Naive thymus-derived CD4-positive, alpha-beta T cell (primary cell): ENCODE measurements at regions of chr22 and their contacts with region 1.

Region 1: GRCh38 chr22:35299673-35300497 is at the start of gene TOM1:
- DNase-seq: peak; percentile 96 to 100 (median 98)
- ATAC-seq: peak; percentile 91
- H3K4me3 ChIP-seq: peak within 1 kb of the TSS; percentile 77
- H3K4me3 Mint-ChIP-seq: peak within 1 kb of the TSS; percentile 89 to 99 (median 94)
- H3K27ac ChIP-seq: peak within 1 kb of the TSS; percentile 95
- H3K27ac Mint-ChIP-seq: peak within 1 kb of the TSS; percentile 94 to 100 (median 98)
- H3K4me1 ChIP-seq: peaks cover 10% of the 10 kb centered on the region in 2 donors
- H3K4me1 Mint-ChIP-seq: peaks cover 13 to 50% (median 38%) of the 10 kb centered on the region in 7 donors
- H3K27me3 ChIP-seq: no peaks in the 10 kb centered on the region
- H3K27me3 Mint-ChIP-seq: no peaks in the 10 kb centered on the region
- total RNA-seq, gene TOM1: 36.5 to 225 (median 62.1) TPM

Region 2: GRCh38 chr22:35288116-35288515 is 11.8 kb before region 1 on chr22:
- CTCF ChIA-PET with region 1: interaction called, 3 read pairs
- POLR2A ChIA-PET with region 1: interaction called, 15 read pairs
- intact Hi-C with region 1: no loop called
- DNase-seq: no peak
- ATAC-seq: no peak
- H3K4me3 ChIP-seq: no peak overlapping the region
- H3K4me3 Mint-ChIP-seq: no peak overlapping the region
- H3K27ac ChIP-seq: no peak overlapping the region
- H3K27ac Mint-ChIP-seq: no peak overlapping the region
- H3K4me1 ChIP-seq: no peaks in the 10 kb centered on the region
- H3K4me1 Mint-ChIP-seq: peaks cover 0 to 6% (median 0%) of the 10 kb centered on the region in 7 donors
- H3K27me3 ChIP-seq: no peaks in the 10 kb centered on the region
- H3K27me3 Mint-ChIP-seq: no peaks in the 10 kb centered on the region

Region 3: DNA sequence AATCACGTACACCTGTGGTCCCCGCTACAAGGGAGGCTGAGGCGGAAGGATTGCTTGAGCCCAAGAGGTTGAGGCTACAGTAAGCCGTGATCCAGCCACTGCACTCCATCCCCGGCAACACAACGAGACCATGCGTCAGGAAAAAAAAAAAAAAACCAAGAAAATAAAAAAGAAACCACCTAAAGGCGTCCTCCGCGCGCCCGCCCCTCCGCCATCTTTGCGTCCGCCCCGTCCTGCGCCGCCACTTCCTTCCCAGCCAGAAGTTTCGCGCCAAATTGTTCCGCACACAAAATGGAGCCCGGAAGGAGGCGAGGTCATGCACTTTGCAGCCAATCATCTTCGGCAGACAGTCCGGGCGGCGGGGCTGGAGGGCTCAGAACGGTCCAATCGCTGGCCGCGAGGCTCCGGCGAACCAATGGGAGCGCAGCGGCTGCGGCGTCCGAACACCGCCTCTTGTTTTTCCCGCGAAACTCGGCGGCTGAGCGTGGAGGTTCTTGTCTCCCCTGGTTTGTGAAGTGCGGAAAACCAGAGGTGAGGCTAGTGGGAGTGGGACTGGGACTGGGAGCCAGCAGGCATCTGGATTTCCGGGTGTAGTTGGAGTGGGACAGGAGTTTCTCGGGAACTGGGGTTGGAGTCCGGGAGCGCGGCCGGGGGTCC is 99.9 kb after region 1 on chr22 and contains the start of gene MCM5:
- CTCF ChIA-PET with region 1: no interaction called
- POLR2A ChIA-PET with region 1: no interaction called
- intact Hi-C with region 1: loop called in 1 of 2 experiments (anchors 1 kb)
- DNase-seq: peak; percentile 86 to 98 (median 97)
- ATAC-seq: peak; percentile 99
- H3K4me3 ChIP-seq: peak within 1 kb of the TSS; percentile 86
- H3K4me3 Mint-ChIP-seq: peak within 1 kb of the TSS; percentile 94 to 99 (median 99)
- H3K27ac ChIP-seq: peak within 1 kb of the TSS; percentile 80
- H3K27ac Mint-ChIP-seq: peak within 1 kb of the TSS; percentile 90 to 99 (median 96)
- H3K4me1 ChIP-seq: peaks cover 5 to 7% of the 10 kb centered on the region in 2 donors
- H3K4me1 Mint-ChIP-seq: peaks cover 16 to 35% (median 19%) of the 10 kb centered on the region in 7 donors
- H3K27me3 ChIP-seq: no peaks in the 10 kb centered on the region
- H3K27me3 Mint-ChIP-seq: no peaks in the 10 kb centered on the region
- total RNA-seq, gene MCM5: 34.7 to 208 (median 50.7) TPM

Region 4: DNA sequence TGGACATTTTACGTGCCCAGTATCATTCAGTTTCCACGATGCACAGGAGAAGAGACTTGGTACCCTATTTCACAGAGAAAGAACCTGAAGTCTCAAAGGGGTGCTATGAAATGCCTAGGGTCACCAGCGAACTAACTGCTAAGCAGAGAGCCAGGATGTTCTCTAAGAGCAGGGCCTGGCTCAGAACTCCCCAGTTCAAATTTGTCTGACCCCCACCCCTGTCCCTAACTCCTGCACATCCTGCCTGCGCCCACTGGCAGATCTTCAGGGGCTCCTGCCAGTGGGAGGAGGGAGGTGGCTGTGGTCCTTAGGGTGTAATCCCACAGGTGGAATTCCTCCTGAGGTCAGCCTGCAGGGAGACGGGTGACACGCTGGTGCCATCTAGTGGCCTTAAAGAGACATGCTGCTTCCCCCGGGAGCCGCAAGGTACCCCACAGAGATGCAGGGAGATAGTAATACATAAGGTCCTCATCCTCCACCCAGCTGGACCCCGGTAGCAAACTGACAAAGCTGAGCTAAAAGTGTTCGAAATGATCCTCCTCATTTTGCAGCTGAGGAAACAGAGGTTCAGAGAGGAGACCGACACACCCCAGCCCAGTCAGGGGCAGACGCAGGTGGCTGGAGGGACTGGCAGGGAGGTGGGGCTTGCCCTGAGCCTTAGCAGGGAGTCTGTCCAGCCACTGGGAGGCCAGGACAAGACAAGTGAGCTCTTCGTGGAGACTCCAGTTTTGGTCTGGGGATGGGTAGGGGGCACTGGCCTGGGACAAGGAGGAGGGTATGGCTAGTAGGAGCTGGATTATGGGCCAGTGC is 283.2 kb after region 1 on chr22:
- CTCF ChIA-PET with region 1: no interaction called
- POLR2A ChIA-PET with region 1: no interaction called
- intact Hi-C with region 1: loop called in 1 of 2 experiments (anchors 1 kb)
- DNase-seq: peak; percentile 22 to 70 (median 40)
- ATAC-seq: peak; percentile 82
- H3K4me3 ChIP-seq: no peak overlapping the region
- H3K4me3 Mint-ChIP-seq: no peak overlapping the region
- H3K27ac ChIP-seq: no peak overlapping the region
- H3K27ac Mint-ChIP-seq: no peak overlapping the region
- H3K4me1 ChIP-seq: no peaks in the 10 kb centered on the region
- H3K4me1 Mint-ChIP-seq: peaks cover 0 to 6% (median 0%) of the 10 kb centered on the region in 7 donors
- H3K27me3 ChIP-seq: no peaks in the 10 kb centered on the region
- H3K27me3 Mint-ChIP-seq: peaks cover 0 to 7% (median 0%) of the 10 kb centered on the region in 5 donors

Region 5: GRCh38 chr22:35739076-35739930 is 439.4 kb after region 1 on chr22:
- CTCF ChIA-PET with region 1: no interaction called
- POLR2A ChIA-PET with region 1: no interaction called
- intact Hi-C with region 1: no loop called
- DNase-seq: peak in 2 of 9 donors; percentile 2 to 5
- ATAC-seq: no peak
- H3K4me3 ChIP-seq: no peak overlapping the region
- H3K4me3 Mint-ChIP-seq: peak overlapping the region in 1 of 10 donors; percentile 11
- H3K27ac ChIP-seq: no peak overlapping the region
- H3K27ac Mint-ChIP-seq: no peak overlapping the region
- H3K4me1 ChIP-seq: no peaks in the 10 kb centered on the region
- H3K4me1 Mint-ChIP-seq: peaks cover 0 to 1% (median 0%) of the 10 kb centered on the region in 7 donors
- H3K27me3 ChIP-seq: no peaks in the 10 kb centered on the region
- H3K27me3 Mint-ChIP-seq: peaks cover 0 to 4% (median 0%) of the 10 kb centered on the region in 5 donors